ENCODE measurements at regions of chr12 and their contacts with region 1.

Region 1: DNA sequence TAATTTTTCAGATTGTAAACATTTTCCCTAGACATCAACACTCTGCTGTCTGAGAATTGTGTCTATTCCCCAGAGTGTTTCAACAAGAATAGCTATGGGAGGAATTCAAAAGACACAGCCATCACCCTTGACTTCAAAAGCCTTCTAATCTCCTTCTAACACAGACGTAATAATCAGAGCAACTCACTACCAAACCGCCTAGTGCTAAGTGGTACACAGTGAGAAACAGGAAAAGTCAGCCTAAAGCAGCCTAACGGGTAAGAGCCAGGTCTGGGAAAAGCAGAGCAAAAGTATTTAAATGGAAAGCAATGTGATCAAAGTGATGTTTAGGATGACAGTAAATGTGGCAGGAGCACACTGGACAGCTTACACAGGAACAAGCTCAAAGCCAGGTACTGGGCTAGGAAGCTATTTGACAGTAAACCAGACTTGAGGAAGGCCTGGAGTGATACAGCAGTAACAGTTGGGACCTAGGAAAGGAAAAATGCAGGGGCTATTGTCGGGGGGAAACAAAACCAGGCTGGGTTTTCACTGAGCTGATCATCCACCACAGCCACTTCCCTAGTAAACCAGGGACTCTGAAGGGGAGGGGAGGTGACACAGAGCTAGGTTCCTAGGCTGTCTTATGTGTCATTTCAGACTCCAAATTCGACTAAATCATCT is 29.4 kb downstream of the CORO1C start:
- DNase-seq: peak in 1 of 3 donors; percentile 61
- H3K4me3 ChIP-seq: no peak overlapping the region
- H3K4me3 Mint-ChIP-seq: no peak overlapping the region
- H3K27ac ChIP-seq: peak overlapping the region in 1 of 2 donors; percentile 51
- H3K27ac Mint-ChIP-seq: peak overlapping the region; percentile 30 to 89 (median 71)
- H3K4me1 ChIP-seq: peaks cover 19 to 30% of the 10 kb centered on the region in 2 donors
- H3K4me1 Mint-ChIP-seq: peaks cover 49% of the 10 kb centered on the region
- H3K27me3 ChIP-seq: no peaks in the 10 kb centered on the region
- H3K27me3 Mint-ChIP-seq: peaks cover 0 to 2% (median 0%) of the 10 kb centered on the region in 3 donors
- CTCF ChIP-seq: no peak

Region 2: GRCh38 chr12:108664338-108665258 is 37.3 kb before region 1 on chr12:
- intact Hi-C with region 1: loop called in 1 of 2 experiments (anchors 5 kb)
- DNase-seq: peak; percentile 95 to 97 (median 95)
- H3K4me3 ChIP-seq: peak overlapping the region; percentile 5 to 67 (median 43)
- H3K4me3 Mint-ChIP-seq: peak overlapping the region; percentile 61 to 86
- H3K27ac ChIP-seq: peak overlapping the region; percentile 88 to 95
- H3K27ac Mint-ChIP-seq: peak overlapping the region; percentile 97 to 99 (median 99)
- H3K4me1 ChIP-seq: peaks cover 54 to 61% of the 10 kb centered on the region in 2 donors
- H3K4me1 Mint-ChIP-seq: peaks cover 59% of the 10 kb centered on the region
- H3K27me3 ChIP-seq: no peaks in the 10 kb centered on the region
- H3K27me3 Mint-ChIP-seq: no peaks in the 10 kb centered on the region
- CTCF ChIP-seq: peak; percentile 93